Transverse colon (tissue), 4 donors: ENCODE measurements at regions of chr17 and their contacts with region 1.

Region 1: GRCh38 chr17:49861150-49861892 is 13.5 kb upstream of the TAC4 start:
- DNase-seq: peak; percentile 25
- H3K4me3 ChIP-seq: no peak overlapping the region
- H3K27ac ChIP-seq: no peak overlapping the region
- H3K4me1 ChIP-seq: peaks cover 0 to 3% (median 1%) of the 10 kb centered on the region in 4 donors
- H3K27me3 ChIP-seq: peaks cover 15% of the 10 kb centered on the region
- CTCF ChIP-seq: peak; percentile 81 to 89 (median 87)
- EP300 ChIP-seq: no peak
- POLR2A ChIP-seq: no peak

Region 2: DNA sequence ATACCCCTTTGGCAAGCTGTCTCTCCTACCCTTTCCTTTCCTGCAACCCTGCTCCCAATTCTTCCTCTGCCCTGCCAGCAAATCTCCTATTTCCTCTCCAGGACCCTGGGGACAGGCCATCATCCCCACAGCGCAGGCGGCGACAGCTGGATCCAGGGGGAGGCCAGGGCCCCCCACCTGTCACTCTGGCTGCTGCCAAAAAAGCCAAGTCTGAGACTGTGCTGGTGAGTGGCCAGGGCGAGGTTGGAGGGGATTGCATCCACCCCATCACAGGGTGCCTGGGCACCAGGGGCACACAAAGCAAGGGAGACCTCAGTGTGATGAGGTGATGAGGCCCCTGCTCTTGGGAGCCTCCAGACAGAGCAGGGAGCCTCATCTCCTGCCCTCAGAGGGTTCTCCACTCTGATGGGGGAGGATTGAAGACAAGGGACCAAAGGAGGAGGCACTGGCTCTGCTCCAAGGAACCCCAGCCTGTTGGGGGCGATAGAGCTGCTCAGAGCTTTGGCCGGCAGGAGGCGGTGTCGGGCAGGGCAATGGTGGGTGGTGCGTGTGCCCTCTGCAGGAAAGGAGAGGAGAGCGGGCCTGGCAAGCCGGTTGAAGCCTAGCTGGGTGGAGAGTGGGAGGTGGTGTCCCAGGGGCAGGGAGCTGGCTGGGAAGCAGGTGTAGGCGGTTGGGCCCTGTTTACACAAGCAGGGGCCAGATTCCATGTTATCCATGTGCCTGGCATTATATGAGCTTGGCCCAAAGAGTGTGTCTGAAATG is 218.2 kb after region 1 on chr17:
- in situ Hi-C with region 1: no loop called
- intact Hi-C with region 1: loop called (anchors 10 kb)
- DNase-seq: peak; percentile 81
- H3K4me3 ChIP-seq: no peak overlapping the region
- H3K27ac ChIP-seq: peak overlapping the region; percentile 3 to 46 (median 20)
- H3K4me1 ChIP-seq: peaks cover 0 to 8% (median 0%) of the 10 kb centered on the region in 4 donors
- H3K27me3 ChIP-seq: no peaks in the 10 kb centered on the region
- CTCF ChIP-seq: peak; percentile 56 to 99 (median 77)
- EP300 ChIP-seq: peak; percentile 10
- POLR2A ChIP-seq: no peak